Uterus (tissue), 4 donors: ENCODE measurements at regions of chr15 and their contacts with region 1.

Region 1: DNA sequence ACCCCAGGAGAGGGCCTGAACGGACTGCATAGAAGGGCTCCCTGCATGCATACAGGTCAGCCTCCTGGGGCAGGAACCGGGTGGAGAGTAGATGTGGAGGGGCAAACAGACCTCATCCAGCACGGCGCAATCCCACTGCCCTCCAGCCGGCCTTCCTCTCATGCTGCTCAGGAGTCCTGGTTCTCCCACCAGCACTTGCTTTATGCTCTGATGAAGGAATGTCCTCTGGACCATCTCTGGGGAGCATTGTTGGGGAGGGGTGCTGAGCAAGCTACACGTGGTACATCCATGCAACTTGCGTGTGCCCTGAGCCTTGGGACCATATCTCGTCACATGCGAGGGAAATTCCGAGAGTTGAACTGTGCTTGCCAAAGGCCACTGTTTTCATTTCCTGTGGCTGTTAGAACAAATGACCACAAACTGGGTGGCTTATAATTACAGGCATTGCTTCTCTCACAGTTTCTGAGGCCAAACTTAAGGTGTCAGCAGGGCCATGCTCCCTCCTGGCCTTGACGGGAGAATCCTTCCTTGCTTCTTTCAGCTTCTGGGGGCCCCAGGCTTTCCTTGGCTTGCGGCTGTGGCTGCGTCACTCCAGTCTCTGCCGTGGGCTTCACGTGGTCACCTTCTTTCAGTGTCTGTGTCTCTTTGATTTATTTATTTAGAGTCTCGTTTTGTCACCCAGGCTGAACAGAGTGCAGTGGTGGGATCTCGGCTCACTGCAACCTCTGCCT is 12.2 kb downstream of the SELENOS start:
- DNase-seq: no peak
- H3K4me3 ChIP-seq: no peak overlapping the region
- H3K27ac ChIP-seq: no peak overlapping the region
- H3K4me1 ChIP-seq: no peaks in the 10 kb centered on the region
- H3K27me3 ChIP-seq: no peaks in the 10 kb centered on the region
- CTCF ChIP-seq: no peak
- POLR2A ChIP-seq: no peak

Region 2: DNA sequence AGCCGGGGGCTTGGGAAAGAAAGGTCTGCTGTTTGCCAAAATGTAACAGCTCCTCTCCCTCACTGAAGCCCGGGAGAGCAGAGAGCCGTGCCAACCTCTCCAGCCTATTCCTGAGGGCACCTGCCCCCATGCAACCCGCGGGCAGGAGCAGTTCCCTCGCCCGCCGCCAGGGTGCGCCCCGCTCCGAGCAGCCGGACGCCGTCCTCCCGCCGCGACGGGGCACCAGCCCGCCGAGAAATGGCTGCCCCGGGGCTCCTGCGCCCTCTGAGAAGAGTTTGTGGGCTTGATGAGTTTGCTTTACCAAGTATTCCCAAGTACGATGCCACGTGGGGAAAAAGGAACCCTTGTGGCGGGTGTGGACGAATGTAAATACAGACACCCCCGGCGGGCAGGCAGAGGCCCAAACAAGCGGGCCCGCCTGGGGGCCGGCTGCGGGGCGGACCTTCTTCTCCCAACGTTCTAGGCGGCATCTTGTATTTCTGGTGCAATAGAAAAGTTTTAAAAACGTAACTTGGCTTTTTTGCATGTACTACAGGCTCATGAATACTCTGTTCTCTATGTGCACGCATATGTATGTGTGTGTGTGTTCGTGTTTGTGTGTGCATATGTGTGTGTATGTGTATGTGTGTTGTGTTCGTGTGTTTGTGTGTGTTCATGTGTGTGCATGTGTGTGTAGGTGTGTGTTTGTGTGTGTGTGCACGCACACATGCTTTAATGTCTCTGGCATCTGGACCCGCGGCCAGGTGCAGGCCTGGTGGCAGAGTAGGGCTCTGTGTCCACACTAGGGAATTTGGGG is 176.1 kb before region 1 on chr15:
- intact Hi-C with region 1: loop called (anchors 5 kb)
- DNase-seq: peak; percentile 55 to 78
- H3K4me3 ChIP-seq: peak overlapping the region in 1 of 2 donors; percentile 17
- H3K27ac ChIP-seq: peak overlapping the region; percentile 56 to 67
- H3K4me1 ChIP-seq: no peaks in the 10 kb centered on the region
- H3K27me3 ChIP-seq: no peaks in the 10 kb centered on the region
- CTCF ChIP-seq: peak; percentile 98 to 99 (median 98)
- POLR2A ChIP-seq: no peak